Activated CD4-positive, alpha-beta memory T cell treated with anti-CD3 and anti-CD28 coated beads for 36 hours (primary cell): ENCODE measurements at regions of chr1 and their contacts with region 1.

Region 1: DNA sequence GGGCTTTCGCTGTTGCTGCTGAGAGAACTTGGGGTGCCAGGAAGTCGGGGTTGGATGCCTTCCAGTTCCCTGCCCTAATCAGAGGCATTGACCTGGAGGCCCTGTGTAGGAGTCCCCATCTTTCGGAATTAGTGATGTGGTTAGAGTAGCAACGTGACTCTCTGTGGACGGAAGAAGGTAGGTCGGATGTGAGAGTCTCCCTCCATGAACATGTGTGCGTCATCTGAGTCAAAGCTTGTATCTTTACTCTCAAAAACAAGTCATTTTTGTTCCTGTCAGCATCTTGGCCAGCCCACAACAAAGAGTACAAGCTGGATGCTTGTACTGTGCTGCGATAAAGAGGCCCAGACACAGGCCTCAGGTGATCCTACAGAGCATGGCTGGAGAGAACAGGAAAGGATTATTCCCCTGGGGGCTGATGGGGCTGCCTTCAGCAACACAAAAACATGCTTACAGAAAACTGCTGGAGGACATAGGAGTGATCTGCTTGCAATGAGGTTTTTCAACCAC is 31.0 kb upstream of the IL10 start:
- DNase-seq: peak; percentile 89
- H3K4me3 Mint-ChIP-seq: peak overlapping the region; percentile 35
- H3K27ac Mint-ChIP-seq: peak overlapping the region; percentile 66
- H3K4me1 Mint-ChIP-seq: peaks cover 79% of the 10 kb centered on the region
- H3K27me3 Mint-ChIP-seq: peaks cover 13% of the 10 kb centered on the region

Region 2: DNA sequence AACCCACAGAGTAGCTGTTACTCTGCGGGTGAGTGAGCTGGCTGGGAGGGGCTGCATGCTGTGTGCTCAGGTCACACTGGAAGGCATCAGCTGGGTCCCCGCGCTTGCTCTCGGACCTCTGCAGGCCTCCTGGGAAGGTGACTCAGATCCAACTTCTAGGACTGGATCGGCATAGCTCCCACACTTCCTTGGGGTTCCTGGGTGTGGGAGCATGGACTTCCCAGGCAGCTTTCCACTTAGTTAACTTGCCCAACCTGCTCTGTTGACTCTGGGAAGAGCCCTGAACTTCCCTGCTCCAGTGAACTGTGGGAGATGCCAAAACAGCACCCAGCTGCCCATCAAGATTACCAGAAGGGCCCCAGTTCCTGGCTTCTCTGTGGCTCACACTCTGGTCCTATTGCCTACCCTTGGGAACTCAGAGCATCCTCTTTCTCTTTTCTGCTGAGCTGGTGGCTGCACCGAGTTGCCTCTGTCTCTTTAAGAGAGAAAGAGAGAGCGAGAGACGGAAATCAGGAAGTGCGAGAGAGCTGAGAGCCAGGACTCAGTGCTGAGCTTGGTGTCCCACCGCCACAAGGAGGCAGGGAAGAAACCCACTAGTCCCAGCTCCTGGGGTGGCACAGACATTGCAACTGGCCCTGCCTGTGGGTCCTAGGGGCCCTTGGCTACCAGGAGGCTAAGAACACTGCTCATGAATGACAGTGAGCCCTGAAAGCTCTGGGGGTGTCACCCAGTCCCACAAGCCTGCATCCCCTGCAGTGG is 333.2 kb before region 1 on chr1 and contains the start of gene IKBKE:
- CTCF ChIA-PET with region 1: no interaction called
- POLR2A ChIA-PET with region 1: no interaction called
- intact Hi-C with region 1: loop called (anchors 5 kb)
- DNase-seq: peak; percentile 74
- H3K4me3 Mint-ChIP-seq: peak within 1 kb of the TSS; percentile 85
- H3K27ac Mint-ChIP-seq: peak within 1 kb of the TSS; percentile 90
- H3K4me1 Mint-ChIP-seq: peaks cover 87% of the 10 kb centered on the region
- H3K27me3 Mint-ChIP-seq: no peaks in the 10 kb centered on the region
- total RNA-seq, gene IKBKE: 18.4 to 19.4 TPM

Region 3: DNA sequence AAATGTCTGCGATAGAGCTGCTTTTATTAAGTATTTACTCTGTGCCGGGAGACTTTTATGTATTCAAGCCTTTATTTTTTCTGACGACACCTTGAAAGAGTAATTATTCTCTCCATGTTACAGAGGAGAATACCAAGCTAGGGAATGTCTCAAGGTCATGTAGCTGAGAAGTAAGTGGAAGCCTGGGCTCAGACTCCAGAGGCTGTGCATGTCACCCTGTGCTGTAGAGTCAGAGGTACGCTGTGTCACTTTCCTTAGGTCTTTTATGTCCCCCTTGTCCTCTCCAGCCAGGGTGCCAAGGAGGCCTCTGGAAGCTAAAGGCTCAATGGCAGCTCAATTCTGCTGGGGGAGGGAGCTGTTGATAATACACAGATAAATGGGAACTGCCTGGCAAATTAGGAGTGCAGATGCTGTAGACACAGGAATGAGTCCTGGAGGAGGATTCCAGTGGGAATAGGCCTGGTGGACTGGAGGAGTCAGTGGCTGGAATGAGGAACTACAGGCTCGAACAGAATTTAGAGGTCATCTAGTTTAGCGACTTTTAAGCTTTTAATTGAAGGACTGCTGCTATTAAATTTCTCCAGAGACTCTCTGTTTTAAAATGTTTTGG is 42.0 kb before region 1 on chr1:
- CTCF ChIA-PET with region 1: interaction called, 8 read pairs
- POLR2A ChIA-PET with region 1: interaction called, 44 read pairs
- intact Hi-C with region 1: loop called (anchors 1 kb)
- DNase-seq: no peak
- H3K4me3 Mint-ChIP-seq: no peak overlapping the region
- H3K27ac Mint-ChIP-seq: no peak overlapping the region
- H3K4me1 Mint-ChIP-seq: peaks cover 30% of the 10 kb centered on the region
- H3K27me3 Mint-ChIP-seq: peaks cover 5% of the 10 kb centered on the region

Region 4: DNA sequence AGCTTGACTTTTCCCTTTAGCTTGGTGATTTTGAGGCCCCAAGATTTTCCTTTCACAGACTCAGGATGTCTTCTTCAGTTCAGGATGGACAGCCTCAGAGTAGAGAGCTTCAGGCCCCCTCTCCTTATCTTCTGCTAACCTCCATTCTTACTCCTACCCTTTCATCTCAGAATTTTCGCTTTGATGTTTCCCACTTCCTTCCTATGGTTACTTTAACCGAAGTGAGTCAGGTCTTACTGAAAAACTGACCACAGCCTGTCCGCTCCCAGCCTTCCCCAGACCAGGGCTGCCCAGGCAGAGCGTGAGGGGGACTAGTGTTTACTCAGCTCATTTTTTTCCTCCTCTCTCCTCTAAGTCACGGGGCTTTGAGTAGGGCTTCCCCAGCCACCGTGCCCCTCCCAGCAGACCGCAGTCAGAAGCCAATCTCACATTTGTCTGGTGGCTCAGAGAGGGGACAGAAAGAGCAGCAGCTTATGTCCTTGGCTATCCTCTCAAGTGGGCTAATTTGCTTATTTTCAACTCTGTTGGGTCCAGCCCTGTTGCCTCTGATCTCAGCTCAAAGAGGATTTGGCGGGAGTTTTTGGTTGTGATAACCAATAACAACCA is 36.9 kb before region 1 on chr1:
- CTCF ChIA-PET with region 1: interaction called, 14 read pairs
- POLR2A ChIA-PET with region 1: interaction called, 44 read pairs
- intact Hi-C with region 1: loop called (anchors 1 kb)
- DNase-seq: peak; percentile 84
- H3K4me3 Mint-ChIP-seq: peak overlapping the region; percentile 44
- H3K27ac Mint-ChIP-seq: peak overlapping the region; percentile 68
- H3K4me1 Mint-ChIP-seq: peaks cover 69% of the 10 kb centered on the region
- H3K27me3 Mint-ChIP-seq: peaks cover 6% of the 10 kb centered on the region

Region 5: GRCh38 chr1:206816390-206817287 is 13.4 kb after region 1 on chr1:
- CTCF ChIA-PET with region 1: interaction called, 8 read pairs
- POLR2A ChIA-PET with region 1: interaction called, 8 read pairs
- intact Hi-C with region 1: loop called (anchors 1 kb)
- DNase-seq: peak; percentile 43
- H3K4me3 Mint-ChIP-seq: peak overlapping the region; percentile 20
- H3K27ac Mint-ChIP-seq: peak overlapping the region; percentile 77
- H3K4me1 Mint-ChIP-seq: peaks cover 26% of the 10 kb centered on the region
- H3K27me3 Mint-ChIP-seq: no peaks in the 10 kb centered on the region